Activated T-helper 1 cell treated with anti-CD3 and anti-CD28 coated beads, Interleukin-12 subunit alpha, Interleukin-12 subunit beta, Interleukin-2, Interleukin-4 antibody, amounts not matched to agents 30 ng/mL and 10 ng/mL and 1 ng/mL, durations not matched to agents 14 hours and 24 hours and 36 hours (primary cell): ENCODE measurements at regions of chr15 and their contacts with region 1.

Region 1: GRCh38 chr15:90419738-90420406 is 31.8 kb downstream of the IQGAP1 start:
- DNase-seq: no peak
- H3K4me3 Mint-ChIP-seq: peak overlapping the region; percentile 56
- H3K27ac Mint-ChIP-seq: peak overlapping the region; percentile 96
- H3K4me1 Mint-ChIP-seq: peaks cover 70% of the 10 kb centered on the region
- H3K27me3 Mint-ChIP-seq: no peaks in the 10 kb centered on the region

Region 2: GRCh38 chr15:90191794-90192509 is 227.9 kb before region 1 on chr15:
- intact Hi-C with region 1: no loop called
- DNase-seq: no peak
- H3K4me3 Mint-ChIP-seq: peak overlapping the region; percentile 70
- H3K27ac Mint-ChIP-seq: no peak overlapping the region
- H3K4me1 Mint-ChIP-seq: peaks cover 44% of the 10 kb centered on the region
- H3K27me3 Mint-ChIP-seq: no peaks in the 10 kb centered on the region

Region 3: DNA sequence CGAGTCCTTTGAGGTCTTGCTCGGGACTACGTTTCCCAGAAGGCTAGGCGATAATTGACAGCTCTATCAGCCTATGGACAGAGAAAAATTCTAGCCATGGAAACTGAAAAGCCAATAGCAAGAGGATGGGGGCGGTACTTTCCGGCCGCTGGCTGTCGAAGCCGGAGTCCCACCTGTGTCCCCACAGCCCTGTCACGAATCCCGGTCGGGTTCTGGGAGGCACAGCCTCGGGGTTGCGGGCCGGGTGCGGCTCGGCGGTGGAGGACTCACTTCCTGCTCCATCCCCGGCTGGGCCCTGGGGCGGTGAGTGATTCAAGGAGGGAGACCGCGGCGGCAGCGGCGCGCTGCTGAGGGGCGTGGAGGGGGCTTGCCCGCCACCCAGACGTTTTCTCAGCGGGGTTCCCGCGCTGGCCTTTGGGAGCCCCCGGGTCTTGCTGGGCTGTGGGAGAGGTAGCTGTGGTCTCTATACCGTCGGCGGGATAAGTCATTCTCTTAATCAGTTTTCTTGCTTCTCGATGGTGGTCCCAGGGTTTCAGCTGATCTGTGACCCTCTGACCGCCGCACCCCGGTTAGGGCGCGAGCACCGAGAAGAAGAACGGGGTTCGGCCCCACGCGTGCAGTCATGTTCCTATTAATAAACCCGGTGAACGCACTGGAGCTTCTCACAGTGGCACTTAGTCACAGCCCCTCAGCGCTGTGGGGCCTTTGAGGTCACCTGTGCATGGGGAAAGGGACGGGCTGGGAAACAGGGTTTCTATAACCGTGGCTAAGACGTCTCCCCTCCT is 67.6 kb before region 1 on chr15 and contains the start of gene ZNF774:
- intact Hi-C with region 1: loop called (anchors 2 kb)
- DNase-seq: peak; percentile 88
- H3K4me3 Mint-ChIP-seq: peak within 1 kb of the TSS; percentile 90
- H3K27ac Mint-ChIP-seq: peak within 1 kb of the TSS; percentile 85
- H3K4me1 Mint-ChIP-seq: peaks cover 10% of the 10 kb centered on the region
- H3K27me3 Mint-ChIP-seq: no peaks in the 10 kb centered on the region
- total RNA-seq, gene ZNF774: 1.6 and 2.1 TPM in 2 replicates

Region 4: DNA sequence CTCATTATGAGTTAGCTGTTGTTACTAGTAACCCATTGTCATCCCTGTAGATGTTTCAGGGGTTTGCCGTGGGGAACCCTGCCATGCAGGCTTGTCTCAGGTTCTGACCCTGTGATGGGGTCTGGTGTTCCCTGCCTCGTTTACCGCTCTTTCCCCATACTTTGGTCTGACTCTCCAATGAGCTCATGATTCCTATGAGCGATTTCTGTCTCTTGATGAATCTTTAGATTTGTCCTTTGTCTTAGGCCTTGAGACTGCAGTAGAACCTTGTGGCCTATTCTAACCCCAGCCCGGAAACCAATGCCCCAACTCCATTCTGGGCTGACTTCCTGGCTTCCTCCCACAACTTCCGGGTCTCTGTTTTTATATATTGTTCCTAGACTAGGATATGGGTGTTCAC is 43.1 kb before region 1 on chr15:
- intact Hi-C with region 1: loop called (anchors 1 kb)
- DNase-seq: peak; percentile 65
- H3K4me3 Mint-ChIP-seq: peak overlapping the region; percentile 61
- H3K27ac Mint-ChIP-seq: peak overlapping the region; percentile 97
- H3K4me1 Mint-ChIP-seq: peaks cover 42% of the 10 kb centered on the region
- H3K27me3 Mint-ChIP-seq: no peaks in the 10 kb centered on the region

Region 5: DNA sequence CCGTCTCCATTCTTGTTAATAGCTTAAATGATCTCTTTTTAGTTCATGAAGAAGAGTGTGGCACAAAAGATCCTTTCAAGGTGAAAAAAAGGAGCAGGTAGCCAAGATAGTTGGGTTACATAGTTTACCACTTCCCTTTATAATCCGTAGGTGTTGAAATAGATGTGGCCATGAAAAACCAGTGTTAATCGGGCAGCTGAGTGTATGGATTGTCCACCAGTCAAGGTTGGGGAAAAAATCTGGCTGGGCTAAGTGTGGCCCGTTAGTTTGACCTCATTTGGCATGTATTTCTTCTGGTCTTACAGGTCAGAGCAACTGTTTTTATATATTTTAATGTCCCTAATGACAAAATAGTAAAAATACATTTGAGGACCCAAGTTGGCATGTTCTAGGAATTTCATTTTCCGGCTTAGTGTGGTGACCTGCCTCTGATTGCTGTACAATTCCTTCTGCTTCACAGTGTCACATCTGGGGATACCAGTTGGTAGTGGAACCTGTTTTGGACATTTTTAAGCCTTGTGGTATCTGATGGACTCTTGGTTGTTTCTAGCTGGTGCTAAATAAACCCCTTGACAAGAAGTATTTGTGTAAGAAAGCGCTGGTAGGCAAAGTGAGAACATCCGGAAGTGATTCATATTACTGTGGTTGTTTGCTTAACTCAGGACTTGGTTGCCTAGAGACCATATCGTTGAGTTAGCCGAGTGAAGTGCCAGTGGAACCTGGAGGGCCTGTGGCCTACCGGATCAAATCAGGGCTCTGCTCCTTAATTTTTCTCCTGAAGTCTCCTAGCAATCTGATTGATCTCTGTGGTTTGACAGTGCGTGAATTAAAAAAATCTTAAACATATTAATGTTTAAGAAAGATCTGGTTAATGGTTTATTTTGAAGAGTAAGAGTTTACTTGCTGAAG is 19.2 kb before region 1 on chr15:
- intact Hi-C with region 1: loop called (anchors 1 kb)
- DNase-seq: peak; percentile 69
- H3K4me3 Mint-ChIP-seq: peak overlapping the region; percentile 64
- H3K27ac Mint-ChIP-seq: peak overlapping the region; percentile 94
- H3K4me1 Mint-ChIP-seq: peaks cover 58% of the 10 kb centered on the region
- H3K27me3 Mint-ChIP-seq: no peaks in the 10 kb centered on the region

Region 6: DNA sequence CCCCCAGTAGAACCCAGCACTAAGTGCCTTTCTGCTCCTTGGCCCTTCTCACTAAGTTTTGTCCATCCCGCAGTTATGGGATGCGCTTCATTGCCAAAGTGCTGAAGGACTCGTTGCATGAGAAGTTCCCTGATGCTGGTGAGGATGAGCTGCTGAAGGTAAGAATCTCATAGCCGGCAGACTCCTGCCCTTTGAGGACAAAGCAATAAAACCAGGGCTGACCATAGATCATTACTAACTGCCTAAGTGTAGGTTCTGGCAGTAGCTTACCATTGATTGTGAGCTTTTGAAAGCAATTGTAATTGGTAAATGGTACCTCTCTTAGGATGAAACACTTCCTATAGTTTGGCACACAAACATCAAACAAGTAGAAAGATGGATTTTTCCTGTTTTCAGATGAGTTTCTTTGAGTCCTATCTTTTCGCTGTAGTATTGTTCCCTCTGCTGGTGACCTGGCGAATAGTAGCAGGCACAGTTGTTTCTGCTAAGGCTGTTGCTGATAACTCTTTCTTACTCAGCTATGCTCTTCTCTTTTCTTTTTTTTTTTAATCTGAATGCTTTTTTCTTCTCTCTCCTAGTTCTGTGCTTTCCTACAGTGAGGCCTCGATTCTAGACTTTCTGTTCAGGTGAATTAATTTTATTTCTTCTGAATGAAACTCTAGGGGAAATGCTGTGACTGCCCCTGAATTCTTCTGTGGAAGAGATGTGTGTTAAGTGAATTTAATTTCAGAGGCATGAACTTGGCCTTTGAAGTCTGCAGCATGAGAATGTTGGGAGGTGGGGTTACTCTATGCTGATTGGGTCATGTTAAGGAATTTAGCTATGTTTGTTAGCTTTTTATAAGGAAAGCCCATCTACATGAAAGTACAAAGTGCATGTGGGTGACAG is 62.5 kb after region 1 on chr15:
- intact Hi-C with region 1: loop called (anchors 1 kb)
- DNase-seq: peak; percentile 11
- H3K4me3 Mint-ChIP-seq: no peak overlapping the region
- H3K27ac Mint-ChIP-seq: peak overlapping the region; percentile 13
- H3K4me1 Mint-ChIP-seq: peaks cover 43% of the 10 kb centered on the region
- H3K27me3 Mint-ChIP-seq: no peaks in the 10 kb centered on the region

Region 7: GRCh38 chr15:90839187-90840071 is 419.6 kb after region 1 on chr15:
- intact Hi-C with region 1: loop called (anchors 5 kb)
- DNase-seq: no peak
- H3K4me3 Mint-ChIP-seq: peak overlapping the region; percentile 79
- H3K27ac Mint-ChIP-seq: peak overlapping the region; percentile 99
- H3K4me1 Mint-ChIP-seq: peaks cover 84% of the 10 kb centered on the region
- H3K27me3 Mint-ChIP-seq: no peaks in the 10 kb centered on the region

Region 8: DNA sequence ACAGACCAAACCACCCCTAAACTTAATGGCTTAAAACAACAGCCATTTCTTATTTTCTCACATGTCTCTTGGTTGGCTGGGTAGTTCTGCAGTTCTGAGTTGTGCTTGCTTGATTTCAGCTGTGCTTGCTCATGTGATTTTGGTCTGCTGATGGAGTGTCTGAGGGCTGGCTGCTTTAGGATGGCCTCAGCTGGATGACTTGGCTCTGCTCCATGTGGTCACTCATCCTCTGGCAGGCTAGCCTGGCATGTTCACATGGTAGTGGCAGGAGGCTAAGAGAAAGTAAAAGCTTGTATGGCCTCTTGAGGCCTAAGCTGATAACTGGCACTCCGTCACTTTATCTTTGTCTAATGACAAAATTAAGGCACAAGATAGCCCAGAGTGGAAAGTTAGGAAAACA is 684.2 kb after region 1 on chr15:
- intact Hi-C with region 1: no loop called
- DNase-seq: no peak
- H3K4me3 Mint-ChIP-seq: no peak overlapping the region
- H3K27ac Mint-ChIP-seq: no peak overlapping the region
- H3K4me1 Mint-ChIP-seq: peaks cover 17% of the 10 kb centered on the region
- H3K27me3 Mint-ChIP-seq: peaks cover 57% of the 10 kb centered on the region